Right ventricle myocardium inferior (tissue), 1 donor: ENCODE measurements at regions of chr12 and their contacts with region 1.

Region 1: DNA sequence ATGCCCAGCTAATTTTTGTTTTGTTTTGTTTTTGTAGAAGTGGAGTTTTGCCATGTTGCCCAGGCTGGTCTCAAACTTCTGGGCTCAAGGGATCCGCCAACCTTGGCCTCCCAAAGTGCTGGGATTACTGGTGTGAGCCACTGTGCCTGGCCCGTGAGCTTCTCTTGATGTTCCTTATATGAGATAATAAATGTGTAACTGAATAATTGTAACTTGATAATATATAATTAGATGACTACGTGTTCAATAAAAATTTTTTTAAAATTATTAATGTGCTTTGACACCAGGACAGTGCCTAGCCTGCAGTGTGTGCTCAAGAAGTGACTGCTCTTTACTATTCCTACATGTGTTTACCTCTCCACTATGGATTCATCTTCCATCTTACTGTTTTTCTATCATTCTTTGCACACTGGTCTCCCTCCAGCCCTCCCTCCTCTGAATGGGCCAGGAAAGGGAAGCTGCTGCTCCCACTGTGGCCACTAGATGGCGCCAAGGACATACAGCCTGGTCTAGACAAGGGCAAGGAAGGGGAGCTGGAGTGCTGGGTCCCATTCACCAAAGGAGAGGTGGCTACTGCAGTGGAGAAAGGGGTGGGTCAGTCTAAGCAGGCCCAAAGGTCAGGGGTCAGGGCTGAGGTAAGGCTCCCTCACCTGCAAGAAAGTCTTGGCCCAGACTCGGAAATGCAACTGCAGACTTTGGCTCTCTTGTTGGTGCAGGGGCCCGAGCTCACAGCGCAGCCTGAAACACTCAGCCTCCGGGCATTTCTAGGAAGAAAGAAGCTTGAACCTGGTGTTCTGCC is 14.7 kb upstream of the ZNF385A start:
- DNase-seq: peak; percentile 90
- ATAC-seq: peak; percentile 83

Region 2: DNA sequence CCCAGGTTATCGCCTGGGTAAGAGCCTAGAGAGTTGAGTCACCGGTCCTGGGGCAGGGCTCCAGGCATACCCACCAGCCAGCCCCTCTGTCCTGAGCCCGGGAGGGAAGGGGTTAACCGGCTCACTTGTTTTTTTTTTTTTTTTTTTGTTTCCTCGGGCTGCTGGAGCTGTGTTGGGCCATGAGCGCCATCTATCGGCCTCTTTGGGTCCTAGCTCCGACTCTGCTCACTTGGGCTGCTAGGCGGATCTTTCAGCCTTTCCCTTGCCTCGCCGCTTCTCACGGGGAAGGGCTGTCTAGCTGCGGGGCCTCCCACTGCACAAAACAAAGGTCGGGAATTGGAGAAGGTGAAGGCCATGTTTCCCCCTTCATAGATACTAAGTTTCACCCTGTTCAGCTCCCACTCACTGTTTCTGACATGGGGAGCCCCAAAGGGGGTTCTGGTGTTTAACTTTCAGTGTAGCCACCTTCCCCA is 207.6 kb before region 1 on chr12:
- intact Hi-C with region 1: no loop called
- DNase-seq: peak; percentile 88
- ATAC-seq: peak; percentile 55

Region 3: DNA sequence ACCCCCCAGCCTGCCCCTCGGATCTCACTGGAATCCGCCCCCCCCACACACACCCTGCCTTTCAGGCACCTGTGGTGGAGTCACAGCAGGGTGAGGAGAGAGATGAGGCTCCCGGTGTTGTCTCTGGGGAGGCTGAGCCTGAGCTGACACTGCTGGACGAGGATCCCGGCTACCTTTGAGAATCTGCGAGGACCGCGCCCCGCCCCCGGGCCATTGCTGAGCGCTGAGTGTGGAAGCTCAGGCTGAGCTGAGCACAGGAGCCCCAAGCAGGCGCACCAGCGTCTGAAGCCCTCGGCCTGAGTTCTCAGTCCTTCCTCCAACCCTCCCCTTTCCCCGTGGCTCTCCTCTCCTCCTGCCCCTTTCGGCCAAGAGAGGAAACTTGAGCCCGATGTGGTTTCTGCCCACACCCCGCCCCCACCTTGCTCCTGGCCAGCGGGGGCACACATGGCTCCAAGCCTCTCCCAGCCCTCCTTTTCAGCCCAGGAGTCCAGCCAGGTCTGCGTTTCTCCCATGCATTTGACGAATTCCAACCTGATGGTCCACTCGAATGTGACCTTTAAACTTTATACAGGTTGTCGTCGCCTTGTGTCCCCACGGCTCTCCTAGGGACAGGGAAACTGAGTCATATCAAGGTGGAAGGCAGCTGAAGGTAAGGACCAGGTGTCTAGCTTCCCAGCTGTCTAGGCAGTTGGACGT is 98.3 kb before region 1 on chr12 and contains the start of gene NFE2:
- intact Hi-C with region 1: no loop called
- DNase-seq: peak; percentile 88
- ATAC-seq: peak; percentile 54
- total RNA-seq, gene NFE2: 1.1 TPM

Region 4: GRCh38 chr12:54324617-54325441 is 74.4 kb before region 1 on chr12 and contains the start of gene COPZ1:
- intact Hi-C with region 1: no loop called
- DNase-seq: peak; percentile 96
- ATAC-seq: peak; percentile 98
- total RNA-seq, gene COPZ1: 130 TPM

Region 5: DNA sequence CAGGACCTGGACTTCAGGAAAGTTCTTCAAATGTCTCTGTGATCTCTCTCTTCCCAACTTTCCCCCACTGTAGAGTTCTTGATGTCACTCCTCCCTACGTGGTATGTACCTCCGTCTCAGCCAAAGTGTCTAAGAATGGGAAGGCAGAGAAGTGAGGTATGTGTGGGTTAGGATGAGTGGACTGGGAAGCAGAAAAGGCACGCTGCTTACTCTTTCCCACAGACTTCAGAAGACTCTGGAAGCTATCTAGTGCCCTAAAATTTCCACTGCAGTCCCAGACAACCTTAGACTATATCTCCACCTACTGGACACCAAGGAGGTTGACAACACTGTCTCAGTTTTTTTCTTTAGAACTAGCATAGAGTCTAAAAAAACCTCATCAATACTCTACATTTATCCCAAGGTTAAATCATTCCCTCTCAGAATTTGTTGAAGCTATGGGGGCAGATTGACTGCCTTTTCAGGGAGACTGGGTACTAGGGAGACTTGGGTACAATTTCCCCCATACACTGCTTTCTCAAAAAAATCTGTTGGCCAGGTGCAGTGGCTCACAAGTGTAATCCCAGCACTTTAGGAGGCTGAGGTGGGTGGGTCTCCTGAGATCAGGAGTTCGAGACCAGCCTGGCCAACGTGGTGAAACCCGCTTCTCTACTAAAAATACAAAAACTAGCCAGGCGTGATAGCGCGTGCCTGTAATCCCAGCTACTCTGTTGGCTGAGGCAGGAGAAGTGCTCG is 40.5 kb after region 1 on chr12:
- intact Hi-C with region 1: loop called (anchors 1 kb)
- DNase-seq: no peak
- ATAC-seq: peak; percentile 87